K562 (cell line): ENCODE measurements at regions of chr7 and their contacts with region 1.

Region 1: DNA sequence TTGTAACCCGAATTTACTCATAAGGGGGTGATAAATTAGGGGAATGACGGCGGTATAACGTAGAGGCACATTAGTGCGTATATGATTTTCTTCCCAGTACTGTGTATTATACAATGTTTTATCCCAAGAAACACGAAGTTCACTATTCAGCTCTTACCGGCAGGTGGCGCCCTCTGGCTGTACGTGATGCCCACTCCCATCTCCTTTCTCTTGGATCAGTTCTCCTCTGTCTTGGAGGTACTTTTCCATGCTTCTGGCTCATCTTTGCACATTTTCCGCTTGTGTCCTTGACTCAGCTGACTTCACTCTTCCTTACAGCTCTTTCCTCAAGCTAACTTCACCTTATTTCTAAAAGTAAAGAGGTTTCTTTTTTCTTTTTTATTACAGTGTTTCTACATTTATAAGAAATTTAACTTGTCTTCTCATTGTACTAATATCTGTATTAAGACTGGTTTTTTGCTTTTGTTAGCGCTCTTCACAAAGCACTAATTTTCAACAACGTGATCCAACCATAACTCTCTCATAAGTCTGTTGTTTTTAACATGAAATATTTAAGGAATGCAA is 21.3 kb downstream of the TMEM176B start:
- DNase-seq: peak; percentile 80 to 85 (median 83)
- ATAC-seq: peak; percentile 99
- H3K4me3 ChIP-seq: no peak overlapping the region
- H3K27ac ChIP-seq: no peak overlapping the region
- H3K4me1 ChIP-seq: no peaks in the 10 kb centered on the region
- H3K27me3 ChIP-seq: peaks cover 10 to 15% of the 10 kb centered on the region in 2 experiments; a peak in 3 of 5 replicates
- CTCF ChIP-seq: peak; percentile 93 to 98 (median 97)
- EP300 ChIP-seq: peak; percentile 12; the same call in 1 of the 2 replicates
- POLR2A ChIP-seq: no peak
- RAD21 ChIP-seq: peak; percentile 95 to 97

Region 2: GRCh38 chr7:150860291-150860977 is 81.6 kb after region 1 on chr7:
- CTCF ChIA-PET with region 1: interaction called, 11 read pairs
- POLR2A ChIA-PET with region 1: interaction called, 3 read pairs
- in situ Hi-C with region 1: no loop called
- intact Hi-C with region 1: no loop called
- DNase-seq: no peak
- ATAC-seq: peak; percentile 38
- H3K4me3 ChIP-seq: no peak overlapping the region
- H3K27ac ChIP-seq: no peak overlapping the region
- H3K4me1 ChIP-seq: peaks cover 0 to 11% of the 10 kb centered on the region in 2 experiments; a peak in 1 of 5 replicates
- H3K27me3 ChIP-seq: peaks cover 66 to 99% of the 10 kb centered on the region in 2 experiments
- CTCF ChIP-seq: peak in 1 of 3 experiments; percentile 8; a peak in 1 of 6 replicates
- EP300 ChIP-seq: no peak
- POLR2A ChIP-seq: no peak
- RAD21 ChIP-seq: peak in 1 of 2 experiments; percentile 38; a peak in 1 of 4 replicates

Region 3: DNA sequence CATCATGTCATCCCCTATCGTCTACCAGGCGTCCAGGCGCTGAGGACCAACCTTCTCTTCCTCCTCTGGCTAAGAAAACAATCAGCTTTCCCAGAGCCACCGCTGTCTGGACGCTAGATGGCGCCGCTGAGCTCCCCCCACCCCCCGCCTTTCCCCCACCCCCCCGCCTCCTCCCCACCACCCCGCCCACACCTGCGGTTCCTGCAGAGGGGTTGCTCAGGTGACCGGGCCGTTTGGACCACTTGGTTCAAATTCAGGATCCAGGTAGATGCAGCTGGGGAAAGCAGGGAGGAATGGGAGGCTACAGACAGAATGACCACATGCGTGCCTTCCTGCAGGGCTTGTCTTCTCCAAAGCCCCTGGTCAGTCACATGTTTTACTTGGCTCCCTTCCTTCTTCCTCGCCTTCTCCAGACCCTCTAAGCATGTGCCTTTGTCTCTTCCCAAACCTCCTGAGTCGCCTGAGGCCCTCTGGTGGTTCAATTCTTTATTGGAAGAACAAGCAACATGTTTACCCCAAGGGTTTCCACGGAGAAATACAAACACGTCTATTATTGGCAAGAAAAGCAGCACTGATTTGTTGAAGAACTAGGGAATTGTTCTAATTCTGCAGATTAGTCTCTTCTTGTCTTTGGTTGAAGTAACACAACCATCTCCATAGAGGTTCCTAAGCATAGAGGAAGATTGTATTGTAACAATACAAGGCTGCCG is 98.2 kb after region 1 on chr7:
- CTCF ChIA-PET with region 1: interaction called, 18 read pairs
- POLR2A ChIA-PET with region 1: interaction called, 3 read pairs
- in situ Hi-C with region 1: no loop called
- intact Hi-C with region 1: loop called (anchors 1 kb)
- DNase-seq: peak; percentile 86 to 96 (median 94)
- ATAC-seq: peak; percentile 91
- H3K4me3 ChIP-seq: no peak overlapping the region
- H3K27ac ChIP-seq: no peak overlapping the region
- H3K4me1 ChIP-seq: peaks cover 0 to 3% of the 10 kb centered on the region in 2 experiments; a peak in 2 of 5 replicates
- H3K27me3 ChIP-seq: peaks cover 14 to 24% of the 10 kb centered on the region in 2 experiments
- CTCF ChIP-seq: peak; percentile 61 to 78 (median 75); a peak in 5 of 6 replicates
- EP300 ChIP-seq: no peak
- POLR2A ChIP-seq: no peak
- RAD21 ChIP-seq: peak; percentile 46 to 64

Region 4: GRCh38 chr7:150898475-150899011 is 119.7 kb after region 1 on chr7:
- CTCF ChIA-PET with region 1: interaction called, 5 read pairs
- POLR2A ChIA-PET with region 1: no interaction called
- in situ Hi-C with region 1: no loop called
- intact Hi-C with region 1: loop called (anchors 2 kb)
- DNase-seq: peak; percentile 88 to 93 (median 92)
- ATAC-seq: peak; percentile 94
- H3K4me3 ChIP-seq: no peak overlapping the region
- H3K27ac ChIP-seq: no peak overlapping the region; the same call in 2 of the 3 replicates
- H3K4me1 ChIP-seq: peaks cover 17 to 36% of the 10 kb centered on the region in 2 experiments; a peak in 4 of 5 replicates
- H3K27me3 ChIP-seq: peaks cover 17 to 27% of the 10 kb centered on the region in 2 experiments; a peak in 4 of 5 replicates
- CTCF ChIP-seq: peak; percentile 97 to 100 (median 98)
- EP300 ChIP-seq: peak; percentile 17; the same call in 1 of the 2 replicates
- POLR2A ChIP-seq: no peak
- RAD21 ChIP-seq: peak; percentile 99

Region 5: DNA sequence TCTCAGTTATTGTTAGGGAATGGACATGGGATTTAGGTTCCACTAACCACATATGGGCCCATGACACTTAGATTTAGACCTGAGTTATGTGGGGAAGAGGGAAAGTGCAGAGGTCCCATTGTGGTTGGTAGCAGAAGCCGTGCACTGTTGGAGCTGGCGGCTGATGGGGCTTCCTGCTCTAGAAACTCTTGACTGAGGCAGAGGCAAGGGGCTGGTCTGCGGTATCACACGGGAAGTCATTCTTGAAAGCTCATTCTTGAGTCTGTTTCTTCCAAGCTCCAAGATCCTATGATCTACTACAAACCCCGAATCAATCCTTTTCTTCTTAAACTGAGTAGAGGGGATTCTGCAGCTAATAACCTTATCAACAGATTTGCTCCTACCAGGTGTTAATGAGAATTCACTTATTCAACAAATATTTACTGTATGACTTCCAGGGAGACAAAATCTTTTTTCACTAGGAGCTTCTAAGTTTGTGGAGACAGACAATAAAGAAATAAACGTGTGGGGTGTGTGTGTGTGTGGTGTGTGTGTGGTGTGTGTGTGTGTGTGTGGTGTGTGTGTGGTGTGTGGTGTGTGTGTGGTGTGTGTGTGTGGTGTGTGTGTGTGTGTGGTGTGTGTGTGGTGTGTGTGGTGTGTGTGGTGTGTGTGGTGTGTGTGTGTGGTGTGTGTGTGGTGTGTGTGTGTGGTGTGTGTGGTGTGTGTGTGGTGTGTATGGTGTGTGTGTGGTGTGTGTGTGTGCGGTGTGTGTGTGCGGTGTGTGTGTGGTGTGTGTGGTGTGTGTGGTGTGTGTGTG is 130.6 kb after region 1 on chr7:
- CTCF ChIA-PET with region 1: no interaction called
- POLR2A ChIA-PET with region 1: no interaction called
- in situ Hi-C with region 1: no loop called
- intact Hi-C with region 1: no loop called
- DNase-seq: peak in 1 of 4 experiments; percentile 6
- ATAC-seq: no peak
- H3K4me3 ChIP-seq: no peak overlapping the region
- H3K27ac ChIP-seq: no peak overlapping the region
- H3K4me1 ChIP-seq: peaks cover 0 to 5% of the 10 kb centered on the region in 2 experiments; a peak in 3 of 5 replicates
- H3K27me3 ChIP-seq: peaks cover 8 to 30% of the 10 kb centered on the region in 2 experiments; a peak in 4 of 5 replicates
- CTCF ChIP-seq: no peak
- EP300 ChIP-seq: no peak
- POLR2A ChIP-seq: no peak
- RAD21 ChIP-seq: no peak